ENCODE measurements at regions of chr22 and their contacts with region 1.

Region 1: GRCh38 chr22:22959147-22959827 is 71.7 kb downstream of the IGLL5 start:
- DNase-seq: peak; percentile 86
- ATAC-seq: peak; percentile 78
- H3K4me3 Mint-ChIP-seq: no peak overlapping the region
- H3K27ac Mint-ChIP-seq: no peak overlapping the region
- H3K4me1 Mint-ChIP-seq: no peaks in the 10 kb centered on the region
- H3K27me3 Mint-ChIP-seq: peaks cover 34% of the 10 kb centered on the region

Region 2: GRCh38 chr22:22787786-22788459 is 171.4 kb before region 1 on chr22:
- CTCF ChIA-PET with region 1: interaction called, 53 read pairs
- POLR2A ChIA-PET with region 1: no interaction called
- DNase-seq: peak; percentile 81
- ATAC-seq: peak; percentile 90
- H3K4me3 Mint-ChIP-seq: no peak overlapping the region
- H3K27ac Mint-ChIP-seq: peak overlapping the region; percentile 30
- H3K4me1 Mint-ChIP-seq: peaks cover 25% of the 10 kb centered on the region
- H3K27me3 Mint-ChIP-seq: peaks cover 13% of the 10 kb centered on the region

Region 3: GRCh38 chr22:22848364-22848866 is 110.9 kb before region 1 on chr22:
- CTCF ChIA-PET with region 1: interaction called, 32 read pairs
- POLR2A ChIA-PET with region 1: no interaction called
- DNase-seq: peak; percentile 77
- ATAC-seq: peak; percentile 95
- H3K4me3 Mint-ChIP-seq: no peak overlapping the region
- H3K27ac Mint-ChIP-seq: no peak overlapping the region
- H3K4me1 Mint-ChIP-seq: peaks cover 5% of the 10 kb centered on the region
- H3K27me3 Mint-ChIP-seq: peaks cover 24% of the 10 kb centered on the region

Region 4: GRCh38 chr22:22976033-22976922 is 17.0 kb after region 1 on chr22:
- CTCF ChIA-PET with region 1: interaction called, 23 read pairs
- POLR2A ChIA-PET with region 1: no interaction called
- DNase-seq: no peak
- ATAC-seq: no peak
- H3K4me3 Mint-ChIP-seq: no peak overlapping the region
- H3K27ac Mint-ChIP-seq: no peak overlapping the region
- H3K4me1 Mint-ChIP-seq: no peaks in the 10 kb centered on the region
- H3K27me3 Mint-ChIP-seq: peaks cover 20% of the 10 kb centered on the region

Region 5: DNA sequence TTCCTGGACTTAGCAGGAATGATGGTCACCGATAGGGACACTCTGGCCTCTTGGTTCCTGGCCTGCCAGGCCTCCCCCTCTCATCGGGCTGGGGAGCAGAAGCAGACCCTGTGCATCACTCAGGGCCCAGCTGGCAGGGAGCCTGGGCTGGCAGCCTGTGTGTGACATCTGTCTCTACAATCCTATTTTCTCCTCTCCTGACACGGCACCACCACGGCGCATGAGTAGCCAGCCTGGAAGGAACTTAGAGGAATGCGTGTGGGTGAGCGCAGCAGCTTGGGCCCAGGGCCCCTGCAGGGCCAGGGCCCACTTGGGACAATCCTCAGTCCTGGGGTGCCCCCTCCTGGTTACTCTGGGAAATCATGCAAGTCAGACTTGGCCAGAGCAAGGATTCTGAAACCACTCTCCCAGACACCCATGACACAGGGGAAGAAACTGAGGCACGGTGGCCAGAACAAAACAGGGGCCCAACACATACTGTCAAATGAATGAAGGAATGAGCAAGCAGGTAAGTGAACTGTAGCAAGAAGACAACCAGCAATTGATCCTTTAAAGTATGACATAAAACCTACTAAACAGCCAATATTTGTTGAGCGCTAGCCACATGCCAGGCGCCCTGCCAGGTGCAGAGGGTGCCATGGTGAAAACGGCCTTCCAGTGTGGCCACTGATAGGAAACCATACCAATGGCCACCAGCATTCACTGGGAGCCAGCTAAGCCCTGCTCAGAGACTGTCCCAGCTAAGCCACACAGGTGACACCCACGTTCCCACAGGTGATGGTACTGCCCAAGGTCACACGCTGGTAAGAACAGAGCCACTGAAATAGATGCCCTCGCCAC is 169.2 kb after region 1 on chr22:
- CTCF ChIA-PET with region 1: interaction called, 146 read pairs
- POLR2A ChIA-PET with region 1: no interaction called
- DNase-seq: peak; percentile 80
- ATAC-seq: peak; percentile 85
- H3K4me3 Mint-ChIP-seq: no peak overlapping the region
- H3K27ac Mint-ChIP-seq: peak overlapping the region; percentile 30
- H3K4me1 Mint-ChIP-seq: peaks cover 4% of the 10 kb centered on the region
- H3K27me3 Mint-ChIP-seq: no peaks in the 10 kb centered on the region

Region 6: DNA sequence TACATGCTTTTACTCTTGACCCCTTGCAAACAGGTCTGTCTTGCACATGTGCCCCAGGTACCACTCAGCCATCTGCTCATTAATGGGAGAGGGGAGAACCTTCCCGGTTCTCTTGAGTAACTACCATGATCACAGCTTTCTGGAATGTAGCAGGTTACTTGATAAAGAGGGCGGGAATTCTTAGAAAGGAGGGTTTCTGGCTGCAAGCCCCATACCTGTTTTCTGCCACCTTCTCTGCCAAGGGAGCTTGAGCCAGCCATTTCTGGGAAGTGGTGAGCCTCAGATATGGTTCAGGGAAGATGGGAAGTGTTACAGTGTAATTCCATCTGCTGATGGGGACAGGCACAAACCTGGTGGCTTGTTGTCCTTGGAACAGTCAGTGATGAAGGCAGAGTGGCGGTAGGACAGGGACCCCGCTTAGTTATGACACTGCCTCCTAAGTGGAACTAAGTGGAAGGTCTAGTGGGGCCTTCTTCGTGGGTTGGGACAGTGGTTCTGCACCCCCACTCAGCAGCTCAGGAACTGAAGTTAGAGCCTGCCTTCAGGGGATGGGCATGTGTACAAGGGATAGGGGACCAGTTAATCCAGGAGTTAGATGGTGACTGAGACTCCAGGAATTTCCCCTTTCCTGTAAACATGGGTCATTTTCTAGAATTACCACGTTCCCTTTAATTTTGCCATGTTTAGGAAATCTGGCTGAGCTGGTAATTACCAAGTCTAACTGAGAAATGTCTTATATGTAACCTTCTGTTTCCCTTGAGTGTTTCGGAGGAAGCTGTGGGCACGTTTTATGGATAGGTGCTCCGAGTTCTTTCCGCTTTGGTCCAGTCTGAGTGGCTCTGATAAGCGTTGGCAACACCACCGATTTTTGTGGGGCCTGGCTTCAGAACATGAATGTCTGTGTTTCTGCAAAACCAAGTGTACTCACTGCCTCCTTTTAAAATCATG is 256.3 kb after region 1 on chr22:
- CTCF ChIA-PET with region 1: no interaction called
- POLR2A ChIA-PET with region 1: no interaction called
- DNase-seq: no peak
- ATAC-seq: peak; percentile 8
- H3K4me3 Mint-ChIP-seq: peak overlapping the region; percentile 12
- H3K27ac Mint-ChIP-seq: no peak overlapping the region
- H3K4me1 Mint-ChIP-seq: peaks cover 58% of the 10 kb centered on the region
- H3K27me3 Mint-ChIP-seq: no peaks in the 10 kb centered on the region